Activated CD4-positive, alpha-beta T cell treated with anti-CD3 and anti-CD28 coated beads for 36 hours (primary cell): ENCODE measurements at regions of chr13 and their contacts with region 1.

Region 1: GRCh38 chr13:26707122-26708006 is 53.2 kb downstream of the GPR12 start:
- DNase-seq: peak; percentile 63
- ATAC-seq: peak; percentile 85
- H3K4me3 Mint-ChIP-seq: no peak overlapping the region
- H3K27ac Mint-ChIP-seq: no peak overlapping the region
- H3K4me1 Mint-ChIP-seq: no peaks in the 10 kb centered on the region
- H3K27me3 Mint-ChIP-seq: no peaks in the 10 kb centered on the region

Region 2: GRCh38 chr13:26342898-26343297 is 364.5 kb before region 1 on chr13:
- CTCF ChIA-PET with region 1: no interaction called
- POLR2A ChIA-PET with region 1: no interaction called
- intact Hi-C with region 1: no loop called
- DNase-seq: no peak
- ATAC-seq: no peak
- H3K4me3 Mint-ChIP-seq: no peak overlapping the region
- H3K27ac Mint-ChIP-seq: no peak overlapping the region
- H3K4me1 Mint-ChIP-seq: no peaks in the 10 kb centered on the region
- H3K27me3 Mint-ChIP-seq: no peaks in the 10 kb centered on the region

Region 3: DNA sequence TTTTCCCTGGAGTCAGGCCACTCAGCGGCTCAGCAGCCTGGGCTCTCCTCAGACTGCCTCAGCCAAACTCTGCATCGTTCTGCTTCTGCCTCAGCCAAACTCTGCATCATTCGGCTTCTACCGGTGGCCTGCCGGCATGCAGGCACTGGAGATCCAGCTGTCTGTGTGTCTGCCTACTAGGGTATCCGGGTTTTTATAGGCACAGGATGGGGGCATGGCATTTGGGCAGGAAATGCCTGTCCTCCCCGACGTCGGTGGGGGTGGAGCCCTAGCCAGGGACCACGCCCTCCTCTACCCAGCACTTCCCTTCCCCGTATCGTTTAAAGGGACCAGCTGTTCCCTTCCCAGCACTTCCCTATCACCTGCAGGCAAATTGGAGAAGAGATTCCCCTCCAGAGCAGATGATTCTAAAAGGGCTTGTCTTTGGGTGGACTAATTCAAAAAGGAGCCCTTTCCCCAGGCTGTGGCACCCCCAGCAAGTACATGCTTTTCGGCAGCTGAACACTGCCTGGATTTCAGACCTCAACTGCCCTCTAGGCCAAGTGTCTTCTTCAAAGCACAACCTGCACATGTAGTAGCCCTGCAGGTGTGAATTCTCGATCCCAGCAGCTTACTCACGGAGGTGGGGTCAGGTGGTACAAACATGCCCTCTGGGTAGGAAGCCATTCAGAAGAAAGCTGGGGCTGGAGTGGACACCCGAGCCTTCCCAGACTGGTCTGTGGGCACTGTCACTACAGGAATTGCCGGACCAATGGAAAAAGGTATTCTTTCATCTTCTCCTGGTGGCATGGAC is 78.7 kb after region 1 on chr13:
- CTCF ChIA-PET with region 1: no interaction called
- POLR2A ChIA-PET with region 1: no interaction called
- intact Hi-C with region 1: loop called in 1 of 2 experiments (anchors 5 kb)
- DNase-seq: peak; percentile 70
- ATAC-seq: peak; percentile 87
- H3K4me3 Mint-ChIP-seq: peak overlapping the region; percentile 67
- H3K27ac Mint-ChIP-seq: peak overlapping the region; percentile 40
- H3K4me1 Mint-ChIP-seq: peaks cover 16% of the 10 kb centered on the region
- H3K27me3 Mint-ChIP-seq: peaks cover 2% of the 10 kb centered on the region

Region 4: GRCh38 chr13:26872525-26873385 is 165.4 kb after region 1 on chr13:
- CTCF ChIA-PET with region 1: interaction called, 15 read pairs
- POLR2A ChIA-PET with region 1: no interaction called
- intact Hi-C with region 1: loop called (anchors 1 kb)
- DNase-seq: peak; percentile 82
- ATAC-seq: no peak
- H3K4me3 Mint-ChIP-seq: no peak overlapping the region
- H3K27ac Mint-ChIP-seq: no peak overlapping the region
- H3K4me1 Mint-ChIP-seq: peaks cover 2% of the 10 kb centered on the region
- H3K27me3 Mint-ChIP-seq: peaks cover 9% of the 10 kb centered on the region

Region 5: DNA sequence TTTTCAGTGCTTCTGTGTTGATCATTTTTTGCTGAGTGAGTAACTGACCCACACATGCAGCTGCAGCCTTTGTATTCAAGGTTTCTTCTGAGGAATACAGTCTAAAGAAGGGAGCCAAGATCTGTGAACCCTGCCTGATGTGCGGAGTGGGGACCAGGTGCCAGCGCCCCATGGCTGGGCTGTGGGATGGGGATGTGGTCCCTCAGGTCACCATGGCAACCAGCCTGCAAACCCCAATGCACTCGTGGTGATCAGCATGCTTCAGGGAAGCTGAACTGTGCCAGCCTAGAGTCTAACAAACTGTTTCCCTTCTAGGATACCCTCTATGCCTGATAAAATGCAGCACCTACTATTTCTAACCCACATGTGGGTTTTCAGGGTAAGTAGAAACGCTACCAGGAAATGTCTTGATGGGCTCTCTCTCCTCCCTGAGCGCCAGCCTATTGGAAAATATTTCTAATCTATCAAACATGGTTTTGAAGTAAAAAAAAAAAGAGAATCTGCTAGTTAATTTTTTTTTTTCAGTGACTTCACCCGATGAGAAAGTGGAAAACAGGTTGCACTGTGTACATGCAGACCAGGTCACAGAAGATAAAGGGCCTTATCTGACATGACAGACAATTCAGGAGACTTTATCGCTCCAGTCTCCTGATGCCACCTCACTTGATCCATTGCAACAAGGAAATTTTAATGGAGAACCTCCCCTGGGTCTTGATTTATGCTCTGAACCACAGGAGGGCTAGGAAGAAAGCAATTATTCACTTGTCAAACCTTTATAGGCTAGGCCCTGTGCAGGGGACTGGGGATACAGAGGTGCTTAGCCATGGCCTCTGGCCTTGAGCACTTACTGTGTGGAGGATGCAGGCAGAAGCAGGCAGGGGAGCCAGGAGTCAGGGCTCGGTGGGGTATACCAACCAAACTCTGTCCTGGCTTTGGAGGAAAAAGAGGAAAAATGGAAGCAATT is 614.4 kb after region 1 on chr13:
- CTCF ChIA-PET with region 1: no interaction called
- POLR2A ChIA-PET with region 1: no interaction called
- intact Hi-C with region 1: no loop called
- DNase-seq: no peak
- ATAC-seq: peak; percentile 61
- H3K4me3 Mint-ChIP-seq: no peak overlapping the region
- H3K27ac Mint-ChIP-seq: no peak overlapping the region
- H3K4me1 Mint-ChIP-seq: peaks cover 5% of the 10 kb centered on the region
- H3K27me3 Mint-ChIP-seq: peaks cover 14% of the 10 kb centered on the region